Activated B cell treated with CpG ODN at 0.5 μM for 24 hours (primary cell): ENCODE measurements at regions of chr11 and their contacts with region 1.

Region 1: DNA sequence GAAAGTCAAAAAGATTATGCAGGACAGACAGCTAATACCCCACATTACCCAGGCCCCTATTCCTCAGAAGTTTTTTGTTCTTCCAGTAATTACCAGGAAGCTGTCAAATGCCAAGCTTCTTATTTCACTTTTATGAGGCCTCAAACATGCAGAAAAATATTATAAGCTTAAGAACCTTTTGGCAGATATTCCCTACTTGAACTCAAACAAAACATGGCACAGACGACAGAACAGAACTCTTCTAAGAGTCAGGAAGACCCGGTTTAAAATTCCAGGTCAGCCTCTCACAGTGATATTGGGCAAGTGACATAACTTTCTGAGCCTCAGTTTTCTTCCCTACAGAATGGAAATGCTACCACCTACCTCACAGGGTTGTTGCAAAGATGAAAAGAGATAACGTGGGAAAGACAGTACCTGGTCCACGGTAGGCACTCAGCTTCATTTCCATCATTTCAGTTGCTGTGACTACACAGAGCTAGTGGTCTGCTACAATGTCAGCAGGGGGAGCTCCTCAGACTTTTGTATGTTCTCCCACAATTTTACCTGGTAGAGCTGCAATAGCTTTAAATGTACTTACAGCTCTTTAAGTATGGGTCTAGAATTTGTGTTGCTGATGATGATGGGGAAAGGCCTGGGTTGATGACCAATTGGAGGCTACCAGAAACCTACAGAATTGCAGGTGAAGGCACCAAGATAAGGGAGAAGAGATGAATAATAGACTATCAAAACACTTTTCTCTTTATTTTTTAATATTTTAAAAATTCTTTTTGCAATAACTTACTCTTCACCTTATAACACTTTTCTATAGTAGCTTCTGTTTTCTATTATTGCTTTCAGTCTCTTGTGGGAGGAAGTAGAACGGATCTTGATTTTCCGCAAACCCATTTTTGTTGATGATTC is 98.3 kb upstream of the CHRM4 start:
- DNase-seq: no peak
- ATAC-seq: peak; percentile 50
- H3K4me3 Mint-ChIP-seq: no peak overlapping the region
- H3K27ac Mint-ChIP-seq: no peak overlapping the region
- H3K4me1 Mint-ChIP-seq: peaks cover 25% of the 10 kb centered on the region
- H3K27me3 Mint-ChIP-seq: no peaks in the 10 kb centered on the region
- CTCF ChIP-seq: no peak

Region 2: GRCh38 chr11:46529095-46529905 is 39.4 kb after region 1 on chr11:
- CTCF ChIA-PET with region 1: interaction called, 4 read pairs
- POLR2A ChIA-PET with region 1: no interaction called
- intact Hi-C with region 1: loop called (anchors 5 kb)
- DNase-seq: peak; percentile 41
- ATAC-seq: peak; percentile 99
- H3K4me3 Mint-ChIP-seq: no peak overlapping the region
- H3K27ac Mint-ChIP-seq: no peak overlapping the region
- H3K4me1 Mint-ChIP-seq: peaks cover 22% of the 10 kb centered on the region
- H3K27me3 Mint-ChIP-seq: no peaks in the 10 kb centered on the region
- CTCF ChIP-seq: no peak

Region 3: GRCh38 chr11:46537537-46538295 is 47.8 kb after region 1 on chr11:
- CTCF ChIA-PET with region 1: interaction called, 7 read pairs
- POLR2A ChIA-PET with region 1: no interaction called
- intact Hi-C with region 1: loop called (anchors 2 kb)
- DNase-seq: no peak
- ATAC-seq: peak; percentile 68
- H3K4me3 Mint-ChIP-seq: no peak overlapping the region
- H3K27ac Mint-ChIP-seq: no peak overlapping the region
- H3K4me1 Mint-ChIP-seq: peaks cover 13% of the 10 kb centered on the region
- H3K27me3 Mint-ChIP-seq: no peaks in the 10 kb centered on the region
- CTCF ChIP-seq: no peak